ENCODE measurements at regions of chr17 and their contacts with region 1.

Region 1: GRCh38 chr17:49997791-49998703 is 3.0 kb upstream of the DLX3 start:
- DNase-seq: peak; percentile 92 to 95
- ATAC-seq: peak; percentile 73 to 88
- H3K4me3 ChIP-seq: no peak overlapping the region
- H3K27ac ChIP-seq: peak overlapping the region; percentile 54 to 71
- H3K4me1 ChIP-seq: peaks cover 29% of the 10 kb centered on the region
- CTCF ChIP-seq: peak; percentile 99
- EP300 ChIP-seq: no peak
- POLR2A ChIP-seq: no peak
- RAD21 ChIP-seq: peak; percentile 99

Region 2: GRCh38 chr17:49707608-49708514 is 290.2 kb before region 1 on chr17 and contains the start of gene SLC35B1:
- CTCF ChIA-PET with region 1: interaction called, 94 read pairs
- POLR2A ChIA-PET with region 1: interaction called, 8 read pairs
- DNase-seq: peak; percentile 100
- ATAC-seq: peak; percentile 97 to 99
- H3K4me3 ChIP-seq: peak within 1 kb of the TSS; percentile 87
- H3K27ac ChIP-seq: peak within 1 kb of the TSS; percentile 90
- H3K4me1 ChIP-seq: peaks cover 10% of the 10 kb centered on the region
- CTCF ChIP-seq: peak; percentile 96
- EP300 ChIP-seq: 0 out of 5 replicates have a peak, but pooled peaks of 1 of the 2 experiments have one; percentile 25
- POLR2A ChIP-seq: peak; percentile 75
- RAD21 ChIP-seq: peak; percentile 63 to 68
- polyA plus RNA-seq, gene SLC35B1: 191 and 287 TPM in 2 replicates

Region 3: DNA sequence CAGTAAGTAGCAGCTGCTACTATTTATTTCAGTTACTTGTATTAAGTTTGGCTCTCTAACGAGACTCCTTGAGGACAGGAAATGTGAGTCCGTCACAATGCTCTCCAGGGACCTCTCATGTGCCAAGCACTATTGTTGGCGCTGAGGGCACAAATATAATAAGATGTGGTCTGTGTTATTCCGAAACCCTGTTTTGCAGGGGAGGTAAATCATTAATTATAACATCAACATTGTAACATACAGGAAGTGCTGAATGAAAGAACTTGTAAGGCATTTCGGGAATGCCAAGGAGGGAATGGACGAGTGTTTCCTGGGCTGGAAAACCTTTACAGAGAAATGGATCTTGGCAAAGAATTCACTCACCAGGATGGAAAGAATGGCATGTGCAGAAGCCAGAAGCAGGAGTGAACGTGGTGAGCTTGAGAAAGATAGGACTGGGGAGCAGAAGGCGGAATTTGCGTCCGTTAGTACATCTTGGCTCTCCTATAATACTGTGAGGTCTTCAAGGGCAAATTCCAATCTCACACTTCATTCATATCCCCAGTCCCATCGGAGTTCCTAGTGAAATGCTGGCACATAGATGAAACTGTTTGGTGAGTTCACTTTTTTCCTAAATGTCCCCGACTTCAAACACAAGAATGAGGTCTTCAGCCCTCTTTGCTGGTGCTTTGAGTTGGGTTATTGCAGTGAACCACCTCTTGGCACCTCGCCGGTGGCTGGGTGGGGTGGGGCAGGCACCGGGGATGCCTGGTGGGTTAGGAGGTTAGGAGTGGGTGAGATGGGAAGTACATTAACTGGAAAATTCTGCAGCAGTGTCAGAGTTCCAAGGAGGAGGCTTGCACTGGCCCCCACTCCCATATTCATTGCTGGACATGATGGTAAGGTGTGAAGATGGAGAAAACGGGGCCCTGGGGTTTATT is 161.7 kb before region 1 on chr17:
- CTCF ChIA-PET with region 1: interaction called, 62 read pairs
- POLR2A ChIA-PET with region 1: no interaction called
- DNase-seq: peak; percentile 68 to 82
- ATAC-seq: peak; percentile 67 to 76
- H3K4me3 ChIP-seq: peak overlapping the region; percentile 31
- H3K27ac ChIP-seq: peak overlapping the region; percentile 76 to 83
- H3K4me1 ChIP-seq: peaks cover 36% of the 10 kb centered on the region
- CTCF ChIP-seq: no peak
- EP300 ChIP-seq: 0 out of 5 replicates have a peak, but pooled peaks of 1 of the 2 experiments have one; percentile 22
- POLR2A ChIP-seq: no peak
- RAD21 ChIP-seq: no peak

Region 4: DNA sequence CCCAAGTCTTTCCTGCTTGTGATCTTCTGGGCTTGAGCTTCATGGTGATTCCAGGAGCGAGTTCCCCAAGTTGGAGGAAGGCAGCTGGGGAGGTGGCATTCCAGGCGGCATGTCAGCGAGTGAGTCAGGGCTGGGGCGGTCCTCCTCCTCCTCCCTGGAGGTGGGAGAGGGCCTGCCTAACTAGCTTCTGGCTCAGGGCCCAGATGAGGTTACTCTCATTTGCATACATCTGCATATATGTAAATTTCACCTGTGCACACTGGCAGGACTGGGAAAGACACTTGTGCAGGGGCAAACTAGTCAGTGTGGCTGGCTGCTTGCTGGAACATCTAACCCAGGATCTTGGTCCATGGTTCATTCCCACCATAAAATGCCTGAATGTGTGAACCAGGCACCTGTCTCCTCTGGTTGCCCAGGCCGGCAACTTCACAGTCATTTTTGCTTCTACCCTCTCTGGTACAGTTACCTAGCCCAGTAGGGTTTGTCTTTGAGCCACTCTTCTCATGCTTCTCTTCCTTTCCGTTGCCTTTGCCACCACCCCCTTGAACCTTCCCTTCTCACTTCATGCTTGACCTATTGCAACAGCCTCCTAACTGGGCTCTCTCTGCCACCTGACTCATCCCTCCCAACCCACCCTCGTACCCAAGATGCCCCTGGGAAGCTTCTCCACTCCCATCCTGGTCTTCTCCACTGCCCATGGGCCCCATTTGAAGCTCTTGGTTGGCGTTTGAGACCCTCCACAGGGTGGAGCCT is 38.7 kb before region 1 on chr17:
- CTCF ChIA-PET with region 1: interaction called, 75 read pairs
- POLR2A ChIA-PET with region 1: no interaction called
- DNase-seq: peak in 1 of 2 experiments; percentile 27
- ATAC-seq: peak; percentile 11 to 38; a peak in 2 of 6 replicates
- H3K4me3 ChIP-seq: no peak overlapping the region
- H3K27ac ChIP-seq: no peak overlapping the region; a peak in 1 of 6 replicates
- H3K4me1 ChIP-seq: peaks cover 10% of the 10 kb centered on the region
- CTCF ChIP-seq: no peak
- EP300 ChIP-seq: no peak
- POLR2A ChIP-seq: no peak
- RAD21 ChIP-seq: no peak

Region 5: DNA sequence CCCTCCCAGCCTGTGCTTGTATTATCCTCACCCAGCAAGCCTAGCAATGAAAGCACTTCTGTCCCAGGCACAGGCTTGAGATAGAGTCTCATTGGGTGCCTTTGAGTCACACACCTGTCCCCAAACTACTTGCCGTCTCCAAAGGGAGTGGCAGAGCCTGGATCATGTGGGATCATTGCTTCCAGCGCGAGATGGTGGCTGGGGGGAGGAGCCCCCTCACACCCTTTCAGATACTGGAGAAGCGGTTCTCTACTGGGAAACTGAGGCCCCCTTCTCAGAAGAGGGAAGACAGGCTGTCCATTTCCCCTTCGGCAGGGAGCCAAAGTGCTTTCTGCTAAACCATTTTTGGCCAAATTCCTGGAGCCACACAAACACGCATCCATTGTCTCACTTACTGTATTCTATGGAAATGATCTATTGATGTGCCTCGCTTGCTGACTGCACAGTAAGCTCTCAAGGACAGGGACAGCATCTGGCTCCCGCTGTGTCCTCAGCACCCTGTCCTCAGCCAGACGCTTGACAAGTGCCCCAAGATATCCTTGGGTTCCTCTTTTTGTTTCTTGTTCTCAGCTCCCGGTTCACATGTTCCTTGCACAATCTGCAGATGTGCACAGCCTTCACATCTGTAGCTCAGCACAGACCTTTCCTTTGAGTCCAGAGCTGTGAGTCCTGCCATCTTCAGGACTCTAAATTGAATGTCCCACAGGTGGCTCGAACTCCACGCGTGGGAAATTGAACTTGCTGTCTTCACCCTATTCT is 23.0 kb after region 1 on chr17:
- CTCF ChIA-PET with region 1: interaction called, 69 read pairs
- POLR2A ChIA-PET with region 1: no interaction called
- DNase-seq: no peak
- ATAC-seq: 0 out of 6 replicates have a peak, but pooled peaks of 1 of the 2 experiments have one; percentile 40
- H3K4me3 ChIP-seq: no peak overlapping the region
- H3K27ac ChIP-seq: no peak overlapping the region
- H3K4me1 ChIP-seq: peaks cover under 1% of the 10 kb centered on the region; the same call in 1 of the 3 replicates
- CTCF ChIP-seq: no peak
- EP300 ChIP-seq: no peak
- POLR2A ChIP-seq: no peak
- RAD21 ChIP-seq: no peak

Region 6: GRCh38 chr17:50079334-50080095 is 81.5 kb after region 1 on chr17:
- CTCF ChIA-PET with region 1: interaction called, 41 read pairs
- POLR2A ChIA-PET with region 1: no interaction called
- DNase-seq: peak; percentile 79 to 87
- ATAC-seq: peak; percentile 73 to 88
- H3K4me3 ChIP-seq: no peak overlapping the region
- H3K27ac ChIP-seq: peak overlapping the region in 1 of 2 experiments; percentile 71; a peak in 3 of 6 replicates
- H3K4me1 ChIP-seq: peaks cover 12% of the 10 kb centered on the region; the same call in 2 of the 3 replicates
- CTCF ChIP-seq: peak; percentile 97
- EP300 ChIP-seq: no peak
- POLR2A ChIP-seq: no peak
- RAD21 ChIP-seq: peak; percentile 76 to 77